WTC11 (cell line): ENCODE measurements at regions of chr2 and their contacts with region 1.

Region 1: DNA sequence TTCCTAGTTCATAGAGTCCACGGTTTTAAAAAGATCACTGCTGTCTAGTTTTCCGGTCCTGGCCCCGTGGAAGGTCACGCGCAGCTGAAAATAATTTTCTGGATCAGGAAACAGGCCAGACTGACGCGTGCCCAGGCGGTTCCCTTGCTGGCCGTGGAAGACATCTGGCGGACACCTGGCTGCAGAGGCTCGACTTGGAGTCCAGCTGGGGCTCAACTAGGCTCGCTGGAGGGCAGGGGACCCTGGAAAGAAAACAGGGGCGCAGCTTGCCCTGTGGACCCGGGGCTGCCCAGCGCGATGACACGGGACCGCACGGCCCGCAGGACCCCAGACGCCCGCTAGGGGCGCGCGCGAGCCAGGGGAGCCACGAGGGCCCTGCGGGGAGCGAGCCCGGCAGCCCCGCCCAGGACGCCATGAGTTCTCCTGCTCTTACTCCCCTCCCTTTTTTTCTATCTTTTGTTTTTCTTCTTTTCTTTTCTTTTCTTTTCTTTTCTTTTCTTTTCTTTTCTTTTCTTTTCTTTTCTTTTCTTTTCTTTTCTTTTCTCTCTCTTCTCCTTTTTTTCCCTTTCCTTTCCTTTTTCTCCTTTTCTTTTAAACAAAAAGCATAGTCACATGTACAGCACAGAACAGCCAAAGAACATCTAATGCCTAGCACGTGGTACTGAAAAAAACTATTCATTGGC is 43.2 kb upstream of the UBE2F start:
- DNase-seq: peak; percentile 87
- ATAC-seq: peak; percentile 98
- H3K4me3 Mint-ChIP-seq: no peak overlapping the region
- H3K27ac Mint-ChIP-seq: no peak overlapping the region
- H3K4me1 Mint-ChIP-seq: 0 out of 2 replicates have a peak, but pooled peaks cover 4% of the 10 kb centered on the region
- H3K27me3 Mint-ChIP-seq: peaks cover 2% of the 10 kb centered on the region; the same call in 1 of the 2 replicates
- CTCF ChIP-seq: peak; percentile 98

Region 2: GRCh38 chr2:237858294-237859081 is 65.1 kb before region 1 on chr2:
- CTCF ChIA-PET with region 1: interaction called, 16 read pairs
- POLR2A ChIA-PET with region 1: no interaction called
- DNase-seq: peak; percentile 71
- ATAC-seq: peak; percentile 86
- H3K4me3 Mint-ChIP-seq: peak overlapping the region; percentile 68
- H3K27ac Mint-ChIP-seq: no peak overlapping the region
- H3K4me1 Mint-ChIP-seq: peaks cover 14% of the 10 kb centered on the region
- H3K27me3 Mint-ChIP-seq: peaks cover 60% of the 10 kb centered on the region
- CTCF ChIP-seq: peak; percentile 44

Region 3: DNA sequence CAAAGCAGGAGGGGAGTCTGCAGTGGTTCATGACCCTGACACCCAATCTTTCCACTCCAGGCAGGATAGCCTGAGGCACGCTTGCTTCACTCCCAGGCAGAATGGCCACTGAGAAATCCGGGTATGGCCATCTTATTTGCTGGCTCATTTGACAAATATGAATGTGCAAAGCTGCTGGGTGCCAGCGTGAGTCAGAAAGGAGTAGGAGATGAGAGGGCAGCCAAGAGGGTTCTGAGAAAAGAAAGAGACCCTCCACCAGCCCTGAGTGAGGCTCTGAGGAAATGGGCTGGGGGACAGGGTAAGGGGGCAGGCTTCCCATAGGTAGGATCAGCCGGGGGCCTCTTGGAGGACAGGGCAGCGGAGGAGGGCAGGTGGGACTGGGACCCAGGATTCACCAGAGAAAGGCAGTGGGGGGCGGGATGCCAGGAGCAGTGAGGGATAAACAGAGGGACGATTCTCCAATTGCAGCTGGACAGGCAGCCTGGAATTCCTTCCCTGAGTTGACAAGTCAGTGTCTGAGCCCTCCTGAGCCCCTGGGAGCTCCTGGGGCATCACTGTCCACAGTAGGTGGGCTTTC is 48.9 kb before region 1 on chr2:
- CTCF ChIA-PET with region 1: interaction called, 11 read pairs
- POLR2A ChIA-PET with region 1: no interaction called
- DNase-seq: no peak
- ATAC-seq: no peak
- H3K4me3 Mint-ChIP-seq: no peak overlapping the region
- H3K27ac Mint-ChIP-seq: no peak overlapping the region
- H3K4me1 Mint-ChIP-seq: peaks cover 7% of the 10 kb centered on the region
- H3K27me3 Mint-ChIP-seq: no peaks in the 10 kb centered on the region
- CTCF ChIP-seq: no peak

Region 4: DNA sequence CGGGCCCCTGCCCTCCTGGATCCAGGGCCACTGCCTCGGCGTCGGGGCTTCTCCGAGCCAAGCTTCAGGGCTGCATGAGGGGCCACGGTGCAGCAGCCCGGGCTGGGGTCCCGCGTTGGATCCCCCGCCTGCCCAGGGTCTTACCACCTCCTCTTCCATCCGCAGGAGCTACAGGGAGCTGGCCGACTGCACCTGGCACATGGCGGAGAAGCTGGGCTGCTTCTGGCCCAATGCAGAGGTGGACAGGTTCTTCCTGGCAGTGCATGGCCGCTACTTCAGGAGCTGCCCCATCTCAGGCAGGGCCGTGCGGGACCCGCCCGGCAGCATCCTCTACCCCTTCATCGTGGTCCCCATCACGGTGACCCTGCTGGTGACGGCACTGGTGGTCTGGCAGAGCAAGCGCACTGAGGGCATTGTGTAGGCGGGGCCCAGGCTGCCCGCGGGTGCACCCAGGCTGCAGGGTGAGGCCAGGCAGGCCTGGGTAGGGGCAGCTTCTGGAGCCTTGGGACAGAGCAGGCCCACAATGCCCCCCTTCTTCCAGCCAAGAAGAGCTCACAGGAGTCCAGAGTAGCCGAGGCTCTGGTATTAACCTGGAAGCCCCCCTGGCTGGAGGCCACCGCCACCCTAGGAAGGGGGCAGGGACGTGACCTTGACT is 12.1 kb before region 1 on chr2:
- CTCF ChIA-PET with region 1: interaction called, 26 read pairs
- POLR2A ChIA-PET with region 1: no interaction called
- DNase-seq: no peak
- ATAC-seq: no peak
- H3K4me3 Mint-ChIP-seq: no peak overlapping the region
- H3K27ac Mint-ChIP-seq: no peak overlapping the region
- H3K4me1 Mint-ChIP-seq: no peaks in the 10 kb centered on the region
- H3K27me3 Mint-ChIP-seq: no peaks in the 10 kb centered on the region; the same call in 1 of the 2 replicates
- CTCF ChIP-seq: no peak

Region 5: GRCh38 chr2:237955640-237956401 is 32.2 kb after region 1 on chr2:
- CTCF ChIA-PET with region 1: interaction called, 26 read pairs
- POLR2A ChIA-PET with region 1: no interaction called
- DNase-seq: peak; percentile 54
- ATAC-seq: peak; percentile 77
- H3K4me3 Mint-ChIP-seq: peak overlapping the region; percentile 35
- H3K27ac Mint-ChIP-seq: no peak overlapping the region
- H3K4me1 Mint-ChIP-seq: peaks cover 10% of the 10 kb centered on the region; the same call in 1 of the 2 replicates
- H3K27me3 Mint-ChIP-seq: peaks cover 19% of the 10 kb centered on the region
- CTCF ChIP-seq: no peak

Region 6: GRCh38 chr2:238027591-238028415 is 104.2 kb after region 1 on chr2:
- CTCF ChIA-PET with region 1: interaction called, 10 read pairs
- POLR2A ChIA-PET with region 1: no interaction called
- DNase-seq: no peak
- ATAC-seq: peak; percentile 77
- H3K4me3 Mint-ChIP-seq: no peak overlapping the region
- H3K27ac Mint-ChIP-seq: peak overlapping the region; percentile 87
- H3K4me1 Mint-ChIP-seq: peaks cover 20% of the 10 kb centered on the region
- H3K27me3 Mint-ChIP-seq: no peaks in the 10 kb centered on the region
- CTCF ChIP-seq: no peak